Posterior cingulate gyrus (tissue), 11 donors: ENCODE measurements at regions of chr15 and their contacts with region 1.

Region 1: GRCh38 chr15:67521029-67521811 is at the start of gene C15orf61:
- DNase-seq: peak; percentile 78 to 97 (median 81)

Region 2: GRCh38 chr15:67542420-67543347 is 21.5 kb after region 1 on chr15 and contains the start of gene MAP2K5:
- intact Hi-C with region 1: loop called (anchors 2 kb)
- DNase-seq: peak; percentile 82 to 98 (median 90)

Region 3: GRCh38 chr15:68053701-68054627 is 532.7 kb after region 1 on chr15 and contains the start of gene PIAS1:
- intact Hi-C with region 1: loop called (anchors 5 kb)
- DNase-seq: peak; percentile 89 to 99 (median 95)